Naive thymus-derived CD8-positive, alpha-beta T cell (primary cell): ENCODE measurements at regions of chr1 and their contacts with region 1.

Region 1: DNA sequence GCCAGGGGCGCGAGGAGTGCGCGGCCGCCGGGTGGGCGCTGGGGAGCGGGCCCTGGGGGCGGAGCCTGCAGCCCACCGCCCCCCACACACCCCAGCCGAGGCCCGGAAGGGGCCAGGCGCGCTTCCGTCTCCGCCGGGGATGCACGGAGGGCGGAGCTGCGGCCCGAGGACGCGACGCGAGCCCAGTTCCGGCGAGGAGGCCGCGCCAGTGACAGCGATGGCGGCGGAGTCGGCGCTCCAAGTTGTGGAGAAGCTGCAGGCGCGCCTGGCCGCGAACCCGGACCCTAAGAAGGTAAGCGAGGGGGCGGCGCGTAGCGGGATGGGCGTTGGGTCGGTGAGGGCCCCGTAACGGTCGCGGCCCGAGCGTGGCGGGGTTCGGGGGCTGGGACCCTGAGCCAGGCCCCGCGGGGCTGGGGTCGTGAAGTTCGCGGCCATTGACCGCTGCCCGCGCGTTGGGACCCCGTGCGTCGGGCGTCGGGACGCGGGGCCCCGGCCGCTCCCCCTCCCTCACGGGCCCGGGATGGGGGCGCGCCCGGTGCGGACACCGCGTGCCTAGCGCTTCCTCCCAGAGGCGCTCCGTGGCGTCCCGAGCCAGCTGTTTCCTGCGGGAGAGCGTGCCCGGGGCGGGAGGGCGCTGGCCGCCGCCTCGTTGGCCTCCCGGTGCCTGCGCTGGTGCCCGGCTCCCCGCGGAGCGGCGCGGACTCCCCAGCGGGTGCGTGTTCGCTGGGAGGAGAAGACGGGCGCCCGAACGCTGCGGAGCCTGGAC is at the start of gene ELOA:
- DNase-seq: peak; percentile 63 to 83 (median 74)
- ATAC-seq: peak; percentile 94
- H3K4me3 Mint-ChIP-seq: peak within 1 kb of the TSS; percentile 87 to 94 (median 91)
- H3K27ac Mint-ChIP-seq: peak within 1 kb of the TSS; percentile 89 to 96 (median 94)
- H3K4me1 Mint-ChIP-seq: peaks cover 24 to 52% (median 48%) of the 10 kb centered on the region in 4 donors
- H3K27me3 Mint-ChIP-seq: no peaks in the 10 kb centered on the region
- polyA plus RNA-seq, gene ELOA: 17.0 to 26.4 (median 19.1) TPM

Region 2: GRCh38 chr1:23362218-23362713 is 381.2 kb before region 1 on chr1:
- POLR2A ChIA-PET with region 1: interaction called, 10 read pairs
- DNase-seq: no peak
- ATAC-seq: no peak
- H3K4me3 Mint-ChIP-seq: no peak overlapping the region
- H3K27ac Mint-ChIP-seq: peak overlapping the region in 2 of 10 donors; percentile 8 to 40
- H3K4me1 Mint-ChIP-seq: peaks cover 8 to 17% (median 13%) of the 10 kb centered on the region in 4 donors
- H3K27me3 Mint-ChIP-seq: no peaks in the 10 kb centered on the region

Region 3: GRCh38 chr1:23691499-23692307 is 51.8 kb before region 1 on chr1 and contains the start of gene RPL11:
- POLR2A ChIA-PET with region 1: interaction called, 20 read pairs
- DNase-seq: peak; percentile 63 to 93 (median 84)
- ATAC-seq: peak; percentile 98
- H3K4me3 Mint-ChIP-seq: peak within 1 kb of the TSS; percentile 90 to 98 (median 94)
- H3K27ac Mint-ChIP-seq: peak within 1 kb of the TSS; percentile 89 to 97 (median 95)
- H3K4me1 Mint-ChIP-seq: peaks cover 33 to 48% (median 47%) of the 10 kb centered on the region in 4 donors
- H3K27me3 Mint-ChIP-seq: peaks cover 0 to 2% (median 0%) of the 10 kb centered on the region in 5 donors
- polyA plus RNA-seq, gene RPL11: 1,566 to 1,847 (median 1,638) TPM

Region 4: DNA sequence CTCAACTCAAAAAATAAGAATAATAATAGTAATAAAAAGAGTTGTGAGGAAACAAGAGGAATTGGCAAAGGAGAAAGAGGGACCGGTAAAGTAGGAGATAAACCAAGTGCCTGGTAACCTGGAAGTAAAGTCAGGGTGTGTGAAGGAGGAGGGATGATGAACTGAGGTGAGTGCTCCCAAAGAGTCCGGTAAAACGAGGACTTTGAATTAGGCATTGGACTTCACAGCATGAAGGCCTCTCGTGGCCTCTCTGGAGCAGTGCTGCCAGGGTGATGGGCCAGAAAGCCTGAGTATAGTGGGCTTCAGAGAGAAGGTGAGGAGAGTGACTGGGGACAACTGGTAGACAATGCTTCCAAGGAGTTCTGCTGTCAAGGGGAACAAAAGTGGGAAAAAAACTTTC is 34.2 kb before region 1 on chr1:
- POLR2A ChIA-PET with region 1: no interaction called
- DNase-seq: no peak
- ATAC-seq: no peak
- H3K4me3 Mint-ChIP-seq: no peak overlapping the region
- H3K27ac Mint-ChIP-seq: peak overlapping the region in 3 of 10 donors; percentile 6 to 78 (median 38)
- H3K4me1 Mint-ChIP-seq: peaks cover 0 to 18% (median 12%) of the 10 kb centered on the region in 4 donors
- H3K27me3 Mint-ChIP-seq: no peaks in the 10 kb centered on the region